ENCODE measurements at regions of chr19 and their contacts with region 1.

Region 1: GRCh38 chr19:33778089-33778791 is 18.4 kb upstream of the KCTD15 start:
- DNase-seq: no peak
- H3K4me3 ChIP-seq: peak overlapping the region in 1 of 4 donors; percentile 42
- H3K27ac ChIP-seq: no peak overlapping the region
- H3K4me1 ChIP-seq: peaks cover 0 to 23% (median 10%) of the 10 kb centered on the region in 3 donors
- H3K27me3 ChIP-seq: peaks cover 0 to 75% (median 0%) of the 10 kb centered on the region in 4 donors
- CTCF ChIP-seq: peak in 5 of 6 experiments; percentile 100
- POLR2A ChIP-seq: no peak

Region 2: DNA sequence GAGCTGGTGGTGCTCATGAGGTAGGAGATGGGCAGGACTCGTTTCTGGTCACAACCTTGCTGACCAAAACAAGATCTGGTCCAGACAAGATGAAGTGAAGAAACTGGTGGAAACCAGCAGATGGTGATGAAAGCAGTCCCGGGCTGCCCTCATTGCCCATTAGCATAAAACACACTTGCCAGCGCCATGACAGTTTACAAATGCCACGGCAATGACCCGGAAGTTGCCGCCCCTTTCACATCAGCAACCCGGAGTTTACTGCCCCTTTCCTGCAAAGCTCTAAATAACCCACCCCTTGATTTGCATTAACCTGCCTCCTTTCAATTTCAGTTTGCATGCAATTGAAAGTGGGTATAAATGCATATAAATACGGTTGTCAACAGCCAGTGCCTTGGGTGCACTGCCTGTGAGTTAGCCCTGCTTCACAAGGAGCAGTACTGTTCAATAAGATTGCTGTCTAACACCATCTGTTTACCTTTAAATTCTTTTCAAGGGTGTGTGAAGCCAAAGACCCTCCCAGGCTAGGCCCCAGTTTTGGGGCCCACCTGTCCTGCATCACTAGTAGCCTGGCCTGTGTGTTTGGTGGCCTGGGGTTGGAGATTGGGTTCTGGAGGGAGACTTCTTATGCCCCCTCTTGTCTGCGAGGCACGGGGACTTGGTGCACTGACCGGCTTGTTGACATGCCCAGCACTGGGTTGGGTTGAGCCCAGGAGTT is 117.7 kb before region 1 on chr19:
- intact Hi-C with region 1: no loop called
- DNase-seq: no peak
- H3K4me3 ChIP-seq: no peak overlapping the region
- H3K27ac ChIP-seq: no peak overlapping the region
- H3K4me1 ChIP-seq: no peaks in the 10 kb centered on the region
- H3K27me3 ChIP-seq: peaks cover 0 to 14% (median 0%) of the 10 kb centered on the region in 4 donors
- CTCF ChIP-seq: no peak
- POLR2A ChIP-seq: no peak

Region 3: DNA sequence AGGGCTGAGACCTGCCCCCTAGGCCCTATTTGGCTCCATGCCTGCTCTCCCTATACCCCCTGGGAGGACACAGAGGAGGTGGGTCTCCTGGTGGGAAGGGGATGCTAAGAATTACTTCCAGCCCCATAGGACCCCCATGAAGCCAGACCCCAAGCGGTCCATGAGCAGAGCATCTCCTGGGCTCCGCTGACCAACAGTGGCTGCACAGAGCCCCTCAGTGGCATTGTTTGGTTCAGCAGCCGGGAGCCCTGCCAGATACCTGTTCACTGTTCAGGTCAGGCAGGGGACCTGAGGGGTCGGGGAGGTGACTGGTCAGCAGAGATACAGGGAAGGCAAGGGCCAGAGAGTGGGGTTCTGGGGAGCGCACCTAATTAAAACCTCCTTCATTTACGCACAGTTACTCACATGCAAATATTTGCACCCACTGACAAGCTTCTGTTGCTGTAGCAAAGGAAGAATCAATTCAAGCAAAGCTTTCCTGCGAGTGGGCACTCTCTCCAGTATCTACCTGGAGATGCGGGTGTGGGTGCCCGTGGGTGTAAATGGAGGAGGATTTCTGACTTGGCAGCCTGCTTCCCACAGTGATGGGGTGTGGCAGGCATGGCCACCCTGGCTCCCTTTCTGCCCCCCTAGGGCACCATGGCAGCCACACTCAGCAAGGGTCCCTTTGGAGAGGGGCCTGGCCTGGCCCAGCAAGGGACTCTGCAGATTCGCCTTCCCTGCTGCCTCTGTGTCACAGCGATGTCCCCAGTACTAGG is 73.0 kb before region 1 on chr19:
- intact Hi-C with region 1: no loop called
- DNase-seq: no peak
- H3K4me3 ChIP-seq: no peak overlapping the region
- H3K27ac ChIP-seq: no peak overlapping the region
- H3K4me1 ChIP-seq: no peaks in the 10 kb centered on the region
- H3K27me3 ChIP-seq: peaks cover 0 to 18% (median 0%) of the 10 kb centered on the region in 4 donors
- CTCF ChIP-seq: no peak
- POLR2A ChIP-seq: no peak

Region 4: DNA sequence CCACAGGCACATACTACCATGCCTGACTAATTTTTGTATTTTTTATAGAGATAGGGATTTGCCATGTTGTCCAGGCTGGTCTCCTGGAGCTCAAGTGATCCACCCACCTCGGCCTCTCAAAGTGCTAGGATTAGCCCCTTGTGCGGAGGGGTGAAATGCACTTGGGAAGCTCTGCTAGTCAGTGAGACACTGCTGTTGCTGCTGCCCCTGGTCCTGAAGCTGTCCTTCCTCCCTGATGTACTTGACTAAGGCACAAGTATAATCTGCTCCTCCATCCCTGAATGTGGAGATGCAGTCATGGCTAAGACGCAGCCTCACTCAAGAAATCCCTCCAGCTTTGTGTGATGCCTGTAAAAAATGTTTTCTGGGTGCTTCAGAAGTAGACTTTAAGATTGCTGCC is 142.9 kb after region 1 on chr19:
- intact Hi-C with region 1: no loop called
- DNase-seq: no peak
- H3K4me3 ChIP-seq: no peak overlapping the region
- H3K27ac ChIP-seq: no peak overlapping the region
- H3K4me1 ChIP-seq: no peaks in the 10 kb centered on the region
- H3K27me3 ChIP-seq: peaks cover 0 to 5% (median 0%) of the 10 kb centered on the region in 4 donors
- CTCF ChIP-seq: no peak
- POLR2A ChIP-seq: no peak

Region 5: DNA sequence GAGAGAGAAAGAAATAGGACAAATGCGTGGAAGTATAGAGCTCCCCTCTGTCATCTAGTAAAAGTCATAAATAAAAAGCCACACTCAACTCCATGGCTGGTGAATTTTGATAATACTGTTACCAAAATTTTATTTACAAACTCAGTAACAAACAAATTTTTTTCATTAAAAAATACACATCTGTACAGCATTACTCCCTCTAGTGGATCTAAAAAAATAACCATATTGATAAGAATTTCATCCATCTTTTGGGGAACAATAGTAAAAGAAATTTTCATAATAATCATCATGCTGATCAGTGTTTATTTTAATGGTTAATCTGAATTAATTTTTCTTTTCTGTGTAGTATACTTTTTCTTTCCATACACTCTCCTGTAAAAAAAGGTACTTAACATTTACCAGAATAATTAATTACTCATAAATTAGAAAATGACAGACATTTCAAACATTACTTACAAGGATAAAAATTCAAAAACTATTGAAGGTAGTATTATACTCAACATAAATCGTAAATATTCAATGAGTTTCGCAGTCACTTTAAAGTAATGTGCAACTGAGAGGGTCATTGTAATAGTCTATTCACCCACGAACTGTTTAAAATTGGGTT is 220.6 kb after region 1 on chr19:
- intact Hi-C with region 1: loop called (anchors 5 kb)
- DNase-seq: no peak
- H3K4me3 ChIP-seq: no peak overlapping the region
- H3K27ac ChIP-seq: no peak overlapping the region
- H3K4me1 ChIP-seq: peaks cover 0 to 6% (median 0%) of the 10 kb centered on the region in 3 donors
- H3K27me3 ChIP-seq: peaks cover 0 to 2% (median 0%) of the 10 kb centered on the region in 4 donors
- CTCF ChIP-seq: peak in 5 of 6 experiments; percentile 10 to 54 (median 42)
- POLR2A ChIP-seq: no peak

Region 6: DNA sequence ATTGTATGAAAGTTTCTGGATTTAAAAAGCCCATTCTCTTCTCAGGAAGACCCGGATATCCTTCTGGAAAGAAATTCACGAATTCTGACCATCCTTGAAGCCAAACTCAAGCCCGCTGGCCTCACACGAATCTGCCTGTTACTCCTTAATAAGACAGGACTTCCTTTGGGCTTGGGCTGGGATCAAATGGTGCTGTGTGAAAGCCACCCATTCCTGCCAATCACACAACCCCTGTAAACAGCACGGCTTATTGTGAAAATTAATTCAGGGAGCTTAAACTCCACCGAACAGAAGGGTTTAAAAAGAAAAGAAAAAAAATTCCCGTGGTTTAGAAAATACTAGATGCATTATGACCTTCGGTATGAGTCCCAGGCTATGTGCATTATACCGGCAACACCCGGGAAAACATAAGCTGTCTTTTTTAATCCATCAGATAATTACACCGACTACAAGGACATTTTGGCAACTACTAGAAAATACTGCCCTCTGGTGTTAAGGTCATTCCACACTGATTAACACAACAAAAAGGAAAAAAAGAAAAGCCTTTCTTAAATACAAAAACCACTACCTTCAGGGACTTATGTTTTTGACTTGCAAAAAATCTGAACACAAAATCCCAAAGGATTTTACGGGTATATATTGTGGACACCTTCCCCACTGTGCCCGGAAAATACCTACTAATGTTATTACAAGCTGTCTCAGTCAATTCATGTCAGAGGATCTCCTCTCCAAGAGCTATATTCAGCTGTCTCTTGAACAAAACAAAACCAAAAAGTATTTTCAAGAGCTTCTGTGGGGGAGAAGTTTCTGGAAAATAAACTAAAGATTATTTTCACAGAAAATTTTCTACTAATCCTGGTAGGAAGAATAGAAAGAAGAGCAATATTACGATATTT is 318.0 kb after region 1 on chr19:
- intact Hi-C with region 1: loop called (anchors 2 kb)
- DNase-seq: no peak
- H3K4me3 ChIP-seq: no peak overlapping the region
- H3K27ac ChIP-seq: no peak overlapping the region
- H3K4me1 ChIP-seq: peaks cover 0 to 3% (median 0%) of the 10 kb centered on the region in 3 donors
- H3K27me3 ChIP-seq: peaks cover 0 to 12% (median 0%) of the 10 kb centered on the region in 4 donors
- CTCF ChIP-seq: peak; percentile 46 to 81 (median 60)
- POLR2A ChIP-seq: no peak

Measured in esophagus squamous epithelium (tissue), 5 donors.